HCT116 (cell line): ENCODE measurements at regions of chr4 and their contacts with region 1.

Region 1: DNA sequence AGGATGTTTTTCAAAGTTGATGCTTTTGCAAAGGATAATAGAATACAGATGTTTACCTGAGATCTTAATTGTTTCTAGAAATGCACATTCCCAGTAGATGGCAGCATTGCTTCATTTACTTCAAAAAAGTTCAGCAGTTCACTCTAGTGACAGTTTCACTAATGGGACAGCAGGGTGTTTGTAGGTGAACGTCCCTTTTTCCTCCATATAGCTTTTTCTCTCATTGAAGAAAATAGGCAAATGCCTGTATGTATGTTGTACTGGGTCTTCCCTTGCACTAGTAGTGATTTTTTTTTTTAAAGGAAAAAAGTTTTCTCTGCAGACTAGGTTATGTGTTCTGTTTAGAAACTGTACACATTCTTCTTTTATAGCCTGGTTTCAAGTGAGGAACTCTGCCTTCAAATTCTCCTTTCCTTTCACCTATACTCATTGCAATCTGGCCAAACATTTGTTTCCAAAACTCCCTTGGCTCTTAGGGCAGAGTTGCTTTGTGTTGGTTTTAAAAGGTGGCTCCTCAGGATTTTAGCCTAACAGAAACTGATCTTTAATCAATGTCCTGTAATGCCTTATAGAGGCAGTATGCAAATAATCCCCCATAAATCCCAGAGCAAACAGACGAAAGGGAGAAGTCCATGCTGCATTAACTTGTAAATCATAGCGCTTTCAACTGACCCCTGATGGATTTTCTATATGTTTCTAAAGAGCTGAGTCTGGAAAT is 86.3 kb downstream of the EGF start:
- DNase-seq: peak; percentile 68
- ATAC-seq: peak; percentile 93
- H3K4me3 ChIP-seq: no peak overlapping the region
- H3K27ac ChIP-seq: no peak overlapping the region
- H3K4me1 ChIP-seq: no peaks in the 10 kb centered on the region
- H3K27me3 ChIP-seq: no peaks in the 10 kb centered on the region
- CTCF ChIP-seq: peak; percentile 48 to 93 (median 78)
- POLR2A ChIP-seq: no peak
- RAD21 ChIP-seq: peak; percentile 88

Region 2: GRCh38 chr4:109836986-109837385 is 162.0 kb before region 1 on chr4:
- CTCF ChIA-PET with region 1: no interaction called
- POLR2A ChIA-PET with region 1: no interaction called
- RAD21 ChIA-PET with region 1: no interaction called
- intact Hi-C with region 1: no loop called
- DNase-seq: no peak
- ATAC-seq: no peak
- H3K4me3 ChIP-seq: no peak overlapping the region
- H3K27ac ChIP-seq: no peak overlapping the region
- H3K4me1 ChIP-seq: no peaks in the 10 kb centered on the region
- H3K27me3 ChIP-seq: no peaks in the 10 kb centered on the region
- CTCF ChIP-seq: no peak
- POLR2A ChIP-seq: no peak
- RAD21 ChIP-seq: no peak

Region 3: GRCh38 chr4:110296892-110297291 is 297.9 kb after region 1 on chr4:
- CTCF ChIA-PET with region 1: no interaction called
- POLR2A ChIA-PET with region 1: no interaction called
- RAD21 ChIA-PET with region 1: no interaction called
- intact Hi-C with region 1: no loop called
- DNase-seq: no peak
- ATAC-seq: no peak
- H3K4me3 ChIP-seq: no peak overlapping the region
- H3K27ac ChIP-seq: no peak overlapping the region
- H3K4me1 ChIP-seq: peaks cover 0 to 12% of the 10 kb centered on the region in 2 experiments; a peak in 2 of 4 replicates
- H3K27me3 ChIP-seq: no peaks in the 10 kb centered on the region
- CTCF ChIP-seq: no peak
- POLR2A ChIP-seq: no peak
- RAD21 ChIP-seq: no peak

Region 4: GRCh38 chr4:110344162-110344561 is 345.1 kb after region 1 on chr4:
- CTCF ChIA-PET with region 1: interaction called, 22 read pairs
- POLR2A ChIA-PET with region 1: no interaction called
- RAD21 ChIA-PET with region 1: no interaction called
- intact Hi-C with region 1: loop called (anchors 2 kb)
- DNase-seq: peak; percentile 3
- ATAC-seq: peak; percentile 72
- H3K4me3 ChIP-seq: no peak overlapping the region
- H3K27ac ChIP-seq: no peak overlapping the region
- H3K4me1 ChIP-seq: no peaks in the 10 kb centered on the region
- H3K27me3 ChIP-seq: no peaks in the 10 kb centered on the region
- CTCF ChIP-seq: peak; percentile 37 to 50 (median 50); a peak in 5 of 6 replicates
- POLR2A ChIP-seq: no peak
- RAD21 ChIP-seq: peak; percentile 66

Region 5: DNA sequence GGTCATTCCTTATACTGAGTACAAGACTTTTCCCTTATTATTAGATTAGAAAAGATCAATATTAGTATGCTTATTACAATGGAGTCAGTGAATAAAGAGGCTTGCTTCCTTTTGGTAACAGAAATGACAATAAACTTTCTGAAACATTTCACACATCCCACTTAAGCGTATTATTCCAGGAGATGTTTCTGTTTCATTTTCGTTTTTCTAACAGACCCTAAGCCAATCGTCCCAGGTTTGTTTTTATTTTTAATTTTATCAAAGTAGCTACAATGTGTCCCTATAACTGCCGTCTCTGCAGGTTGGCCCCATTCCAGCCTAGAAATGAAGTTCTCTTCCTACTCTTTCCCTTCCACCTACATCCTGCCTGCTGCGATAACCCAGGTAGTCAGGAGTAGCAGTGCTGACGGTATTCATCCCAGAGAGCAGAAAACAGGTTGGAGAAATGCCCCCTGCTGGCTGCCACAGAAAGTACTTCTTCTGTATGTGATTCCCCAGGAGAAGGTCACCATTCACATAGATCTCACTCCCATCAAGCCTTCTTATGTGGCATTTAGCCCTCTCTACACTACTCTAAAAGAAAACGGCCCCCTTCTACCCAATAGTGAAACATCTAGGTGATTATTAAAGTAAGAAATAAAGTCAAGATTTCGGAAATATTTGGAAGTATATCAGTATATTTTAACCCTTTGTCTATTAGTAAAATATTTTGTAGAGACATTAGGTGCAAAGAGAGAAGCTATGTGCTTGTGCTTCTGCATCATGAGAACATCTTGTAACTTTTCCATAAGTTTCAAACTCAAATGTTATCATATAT is 517.3 kb after region 1 on chr4:
- CTCF ChIA-PET with region 1: interaction called, 37 read pairs
- POLR2A ChIA-PET with region 1: interaction called, 4 read pairs
- RAD21 ChIA-PET with region 1: no interaction called
- intact Hi-C with region 1: loop called (anchors 1 kb)
- DNase-seq: peak; percentile 72
- ATAC-seq: peak; percentile 98
- H3K4me3 ChIP-seq: peak overlapping the region; percentile 33 to 53
- H3K27ac ChIP-seq: no peak overlapping the region
- H3K4me1 ChIP-seq: peaks cover 0 to 9% of the 10 kb centered on the region in 2 experiments; a peak in 1 of 4 replicates
- H3K27me3 ChIP-seq: no peaks in the 10 kb centered on the region
- CTCF ChIP-seq: peak; percentile 73 to 84 (median 79)
- POLR2A ChIP-seq: no peak
- RAD21 ChIP-seq: peak; percentile 61

Region 6: DNA sequence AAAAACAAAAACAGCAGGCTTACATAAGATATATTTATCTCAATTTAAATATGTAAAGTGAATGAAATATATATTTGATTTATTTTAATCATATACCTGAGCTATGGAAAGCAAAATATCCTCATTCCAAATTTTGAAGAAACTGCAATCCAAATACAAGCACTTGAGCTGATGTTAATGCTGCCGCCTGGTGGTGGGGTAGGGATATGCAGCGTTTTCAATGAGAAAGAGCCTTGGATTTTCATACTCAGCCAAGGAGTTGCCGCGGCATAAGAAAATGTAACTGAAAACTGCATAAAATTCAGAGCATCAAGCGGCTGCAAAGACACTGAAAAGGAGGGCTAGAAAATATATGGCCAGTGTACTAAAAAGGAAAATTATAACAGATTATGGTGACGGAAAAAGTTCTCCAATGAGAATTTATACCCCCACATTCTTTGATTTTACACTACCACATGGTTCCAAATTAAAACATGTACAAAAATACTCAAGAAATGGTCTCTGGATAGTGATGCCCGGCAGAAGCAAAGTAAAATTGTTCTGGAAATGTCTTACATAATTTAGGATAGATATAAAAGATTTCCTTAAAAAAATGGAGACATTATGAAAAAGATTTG is 1284.1 kb after region 1 on chr4:
- CTCF ChIA-PET with region 1: no interaction called
- POLR2A ChIA-PET with region 1: no interaction called
- RAD21 ChIA-PET with region 1: no interaction called
- intact Hi-C with region 1: loop called (anchors 10 kb)
- DNase-seq: peak; percentile 65
- ATAC-seq: peak; percentile 67
- H3K4me3 ChIP-seq: peak overlapping the region; percentile 25 to 34; a peak in 3 of 4 replicates
- H3K27ac ChIP-seq: no peak overlapping the region
- H3K4me1 ChIP-seq: no peaks in the 10 kb centered on the region
- H3K27me3 ChIP-seq: no peaks in the 10 kb centered on the region
- CTCF ChIP-seq: peak; percentile 71 to 89 (median 81)
- POLR2A ChIP-seq: no peak
- RAD21 ChIP-seq: peak; percentile 74

Region 7: DNA sequence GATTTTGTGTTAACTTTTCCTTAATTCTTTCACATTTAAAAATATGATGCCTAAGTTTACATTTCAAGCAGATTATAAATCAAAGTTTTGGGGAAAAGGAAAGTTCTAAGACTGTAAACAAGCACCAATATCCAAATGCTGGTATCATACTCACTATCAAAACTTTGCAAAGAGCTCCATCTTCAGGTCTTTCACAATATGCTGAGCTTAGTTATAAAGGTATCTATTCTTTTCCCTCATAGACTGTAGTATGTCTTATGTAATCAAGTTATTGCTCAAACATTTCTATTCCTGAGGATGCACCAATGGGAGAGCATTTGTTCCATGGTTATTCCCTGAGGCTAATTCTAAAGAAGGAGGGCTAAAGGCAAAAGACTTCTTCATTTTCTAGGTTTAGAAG is 1938.3 kb after region 1 on chr4:
- CTCF ChIA-PET with region 1: interaction called, 3 read pairs
- POLR2A ChIA-PET with region 1: no interaction called
- RAD21 ChIA-PET with region 1: no interaction called
- intact Hi-C with region 1: loop called (anchors 10 kb)
- DNase-seq: peak; percentile 48
- ATAC-seq: peak; percentile 88
- H3K4me3 ChIP-seq: no peak overlapping the region
- H3K27ac ChIP-seq: no peak overlapping the region
- H3K4me1 ChIP-seq: 0 out of 4 replicates have a peak, but pooled peaks cover 0 to 3% of the 10 kb centered on the region in 2 experiments
- H3K27me3 ChIP-seq: no peaks in the 10 kb centered on the region
- CTCF ChIP-seq: peak; percentile 31 to 72 (median 68); a peak in 5 of 6 replicates
- POLR2A ChIP-seq: no peak
- RAD21 ChIP-seq: peak; percentile 79